Posterior vena cava (tissue), 2 donors: ENCODE measurements at regions of chr12 and their contacts with region 1.

Region 1: DNA sequence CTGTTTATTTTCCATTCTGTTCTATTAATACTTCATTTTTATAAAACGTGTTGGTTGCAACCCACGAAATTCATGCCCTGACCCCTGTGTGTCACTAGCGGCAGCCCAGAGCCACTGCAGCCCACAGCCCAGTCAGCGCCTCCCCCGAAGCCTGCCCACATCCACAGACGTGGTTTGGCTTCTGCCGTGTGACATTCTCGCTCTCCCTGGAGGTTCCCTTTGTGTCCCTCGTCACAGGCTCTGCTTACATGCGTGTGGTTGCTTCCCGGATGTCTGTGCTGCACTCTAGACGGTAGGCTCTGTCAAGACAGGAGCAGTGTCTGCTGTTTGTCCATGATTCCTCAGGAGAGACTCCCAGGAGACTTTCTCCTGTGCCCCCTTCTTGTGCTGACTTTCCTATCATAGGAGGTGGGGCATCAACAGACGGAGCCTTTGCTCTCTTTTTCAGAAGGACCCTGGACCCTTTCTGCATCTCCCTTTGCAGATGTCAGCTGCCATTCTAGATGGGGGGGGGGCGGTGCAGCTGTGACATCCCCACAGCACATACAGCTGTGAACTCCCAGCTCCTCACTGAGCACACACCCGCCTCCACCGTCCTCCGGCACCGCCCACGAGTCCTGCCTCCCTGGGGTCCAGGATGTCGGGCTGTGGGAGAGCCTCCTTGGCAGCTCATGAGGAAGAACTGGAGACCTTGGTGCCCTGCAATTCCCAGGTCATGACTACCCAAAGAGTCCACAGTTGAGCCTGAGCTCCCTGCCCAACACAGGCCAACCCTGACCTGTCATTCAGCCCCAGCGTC is 36.8 kb upstream of the PIWIL1 start:
- DNase-seq: no peak

Region 2: GRCh38 chr12:130169256-130169655 is 131.7 kb before region 1 on chr12:
- intact Hi-C with region 1: no loop called
- DNase-seq: no peak

Region 3: GRCh38 chr12:130266751-130267150 is 34.2 kb before region 1 on chr12:
- intact Hi-C with region 1: loop called in 1 of 2 experiments (anchors 1 kb)
- DNase-seq: no peak